ENCODE measurements at regions of chr1 and their contacts with region 1.

Region 1: GRCh38 chr1:35451125-35451528 is 106.1 kb downstream of the KIAA0319L start:
- DNase-seq: peak; percentile 68 to 97 (median 86)

Region 2: DNA sequence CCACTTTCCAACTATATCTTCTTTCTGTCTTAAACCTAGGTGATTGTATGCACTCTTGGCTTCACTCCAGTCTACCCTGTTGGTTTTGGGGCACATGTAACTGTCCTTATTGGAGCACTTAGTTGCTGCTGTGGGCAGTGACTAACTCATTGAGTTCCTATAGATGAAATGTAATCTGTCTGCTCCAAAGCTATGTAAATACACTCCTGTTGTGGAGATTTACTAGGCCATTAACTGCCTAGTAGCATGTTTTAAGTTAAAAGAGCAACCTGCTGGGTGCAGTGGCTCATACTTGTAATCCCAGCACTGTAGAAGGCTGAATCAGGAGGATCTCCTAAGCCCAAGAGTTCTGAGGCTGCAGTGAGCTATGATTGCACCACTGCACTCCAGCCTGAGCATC is 45.0 kb before region 1 on chr1:
- intact Hi-C with region 1: no loop called
- DNase-seq: no peak

Region 3: DNA sequence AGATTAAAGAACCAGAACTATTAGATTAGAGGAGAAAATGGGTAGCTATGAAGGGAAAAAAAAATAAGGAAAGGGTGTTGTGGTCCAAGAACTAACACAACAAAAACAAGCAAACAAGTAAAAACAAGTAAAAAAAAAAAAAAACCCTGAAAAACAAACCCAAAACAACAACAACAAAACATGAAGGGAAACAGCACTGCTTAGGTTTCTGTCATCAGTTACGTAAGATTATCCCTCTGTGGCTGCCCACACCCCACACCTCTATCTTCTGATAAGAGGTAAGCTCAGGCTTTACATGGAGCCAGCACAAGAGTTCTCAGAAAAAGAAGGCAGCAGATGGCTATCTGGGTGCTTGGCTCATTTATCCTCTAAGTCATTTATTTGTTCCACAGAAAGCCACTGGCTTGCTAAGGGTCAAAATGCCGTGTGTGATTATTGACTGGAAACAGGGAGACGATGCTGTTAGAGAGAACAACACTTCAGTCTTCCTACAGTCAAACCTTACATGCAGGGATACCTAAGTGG is 48.6 kb after region 1 on chr1:
- intact Hi-C with region 1: no loop called
- DNase-seq: peak in 1 of 10 donors; percentile 4

Region 4: DNA sequence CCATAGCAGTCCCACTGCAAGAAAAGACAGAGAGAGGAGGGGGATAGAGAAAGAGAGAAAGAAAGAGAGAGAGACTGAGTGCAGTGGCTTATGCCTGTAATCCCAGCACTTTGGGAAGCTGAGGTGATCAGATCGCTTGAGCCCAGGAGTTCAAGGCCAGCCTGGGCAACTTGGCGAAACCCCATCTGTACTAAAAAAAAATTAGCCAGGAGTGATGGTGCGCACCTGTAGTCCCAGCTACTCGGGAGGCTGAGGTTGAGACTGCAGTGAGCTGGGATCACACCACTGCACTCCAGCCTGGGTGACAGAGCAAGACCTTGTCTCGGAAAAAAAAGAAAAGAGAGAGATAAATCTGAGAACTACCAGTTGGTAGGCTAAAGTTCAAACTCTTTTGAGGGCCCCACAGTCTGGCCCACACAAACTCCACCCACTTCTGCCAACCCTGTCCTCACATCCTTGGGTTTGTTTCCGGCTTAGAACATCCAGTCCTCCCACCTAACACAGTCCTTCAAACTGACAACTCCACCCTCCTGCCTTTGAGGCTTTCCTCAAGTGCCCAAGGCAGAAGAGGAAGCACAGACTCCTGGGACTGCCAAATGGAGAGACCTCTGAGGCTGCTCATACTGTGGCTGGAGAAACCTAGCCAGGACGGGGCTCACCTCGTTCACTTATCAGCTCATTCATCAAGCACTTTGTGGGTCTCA is 142.0 kb after region 1 on chr1:
- intact Hi-C with region 1: no loop called
- DNase-seq: no peak

Region 5: GRCh38 chr1:35726450-35727433 is 275.6 kb after region 1 on chr1:
- intact Hi-C with region 1: loop called (anchors 10 kb)
- DNase-seq: peak in 8 of 10 donors; percentile 49 to 93 (median 69)

Region 6: DNA sequence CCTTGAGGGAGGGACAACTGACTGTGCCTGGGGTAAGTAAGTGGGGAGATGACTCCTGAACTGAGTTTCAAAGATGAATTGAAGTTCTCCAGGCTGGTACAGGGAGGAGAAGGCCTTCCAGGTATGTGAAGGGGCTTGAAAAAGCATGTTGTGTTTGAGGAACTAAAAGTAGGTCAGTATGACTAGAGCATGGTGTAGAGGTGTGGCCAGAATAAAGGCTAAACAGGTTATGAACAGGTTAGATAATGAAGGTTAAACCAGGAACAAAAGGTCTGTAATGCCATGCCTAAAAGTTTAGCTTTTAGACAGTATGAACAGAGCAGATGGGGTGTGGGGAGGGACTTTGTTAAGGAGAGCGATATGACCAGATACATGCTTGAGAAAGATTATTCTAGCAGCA is 326.0 kb after region 1 on chr1:
- intact Hi-C with region 1: loop called (anchors 5 kb)
- DNase-seq: no peak

Measured in posterior cingulate gyrus (tissue), 11 donors.